Head of caudate nucleus (tissue), 42 donors: ENCODE measurements at regions of chr14 and their contacts with region 1.

Region 1: GRCh38 chr14:20613094-20614037 is 22.2 kb upstream of the RNASE12 start:
- DNase-seq: peak; percentile 60 to 95 (median 79)

Region 2: GRCh38 chr14:20327005-20327869 is 286.1 kb before region 1 on chr14:
- intact Hi-C with region 1: loop called (anchors 5 kb)
- DNase-seq: peak in 11 of 42 donors; percentile 15 to 73 (median 45)

Region 3: DNA sequence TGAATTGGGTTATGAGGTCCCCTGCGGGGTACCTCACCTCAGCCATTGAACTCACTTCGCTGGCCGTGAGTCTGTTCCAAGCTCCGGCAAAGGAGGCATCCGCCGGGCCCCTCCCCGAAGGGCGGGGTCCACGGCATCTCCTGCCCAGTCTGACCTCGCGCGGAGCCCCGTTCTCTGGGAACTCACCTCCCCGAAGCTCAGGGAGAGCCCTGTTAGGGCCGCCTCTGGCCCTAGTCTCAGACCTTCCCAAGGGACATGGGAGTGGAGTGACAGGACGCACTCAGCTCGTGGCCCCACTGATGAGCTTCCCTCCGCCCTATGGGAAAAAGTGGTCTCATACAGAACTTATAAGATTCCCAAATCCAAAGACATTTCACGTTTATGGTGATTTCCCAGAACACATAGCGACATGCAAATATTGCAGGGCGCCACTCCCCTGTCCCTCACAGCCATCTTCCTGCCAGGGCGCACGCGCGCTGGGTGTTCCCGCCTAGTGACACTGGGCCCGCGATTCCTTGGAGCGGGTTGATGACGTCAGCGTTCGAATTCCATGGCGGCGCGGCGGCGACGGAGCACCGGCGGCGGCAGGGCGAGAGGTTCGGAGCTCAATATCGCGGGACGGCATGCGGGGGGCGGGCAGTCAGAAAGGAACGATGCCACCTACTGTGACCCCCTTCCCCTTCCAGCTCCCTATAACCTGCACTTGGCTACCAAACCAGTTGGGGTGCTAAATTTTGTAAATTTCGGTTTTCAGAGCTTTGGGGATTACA is 270.1 kb before region 1 on chr14 and contains the start of gene PARP2:
- intact Hi-C with region 1: loop called (anchors 5 kb)
- DNase-seq: peak; percentile 94 to 100 (median 98)

Region 4: DNA sequence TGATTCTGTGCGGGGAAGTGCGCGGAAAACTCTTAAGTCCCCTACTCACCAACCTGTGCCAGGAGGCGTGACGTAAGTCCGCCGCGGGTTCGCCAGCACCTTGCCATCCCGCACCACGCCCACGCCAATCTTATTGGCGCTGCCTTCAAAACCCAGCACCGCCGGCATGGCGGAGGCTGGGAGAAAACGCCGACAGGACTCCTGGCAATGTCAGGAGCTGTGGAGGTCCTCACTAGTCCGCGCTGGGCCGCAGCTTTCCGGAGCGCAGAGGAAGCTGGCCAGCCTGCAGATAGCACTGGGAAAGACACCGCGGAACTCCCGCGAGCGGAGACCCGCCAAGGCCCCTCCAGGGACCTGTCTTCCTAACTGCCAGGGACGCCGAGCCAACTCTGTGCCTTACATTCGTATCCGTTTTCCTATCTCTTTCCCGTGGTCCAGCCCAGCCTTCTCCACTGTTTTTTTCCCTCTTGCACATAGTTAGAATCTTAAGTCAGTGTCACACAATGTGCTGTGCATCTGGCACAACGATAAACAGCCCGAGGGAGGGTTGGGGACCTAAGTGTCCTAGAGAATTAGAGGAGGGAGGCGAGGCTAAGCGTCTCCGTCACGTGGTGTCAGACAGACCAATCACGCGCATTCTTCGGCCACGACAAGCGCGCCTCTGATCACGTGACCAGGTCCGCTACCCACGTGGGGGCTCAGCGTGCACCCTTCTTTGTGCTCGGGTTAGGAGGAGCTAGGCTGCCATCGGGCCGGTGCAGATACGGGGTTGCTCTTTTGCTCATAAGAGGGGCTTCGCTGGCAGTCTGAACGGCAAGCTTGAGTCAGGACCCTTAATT is 158.6 kb before region 1 on chr14 and contains the starts of genes APEX1 and OSGEP:
- intact Hi-C with region 1: loop called (anchors 5 kb)
- DNase-seq: peak; percentile 95 to 100 (median 99)

Region 5: GRCh38 chr14:20652996-20653975 is 39.9 kb after region 1 on chr14:
- intact Hi-C with region 1: no loop called
- DNase-seq: peak in 8 of 42 donors; percentile 8 to 44 (median 25)

Region 6: DNA sequence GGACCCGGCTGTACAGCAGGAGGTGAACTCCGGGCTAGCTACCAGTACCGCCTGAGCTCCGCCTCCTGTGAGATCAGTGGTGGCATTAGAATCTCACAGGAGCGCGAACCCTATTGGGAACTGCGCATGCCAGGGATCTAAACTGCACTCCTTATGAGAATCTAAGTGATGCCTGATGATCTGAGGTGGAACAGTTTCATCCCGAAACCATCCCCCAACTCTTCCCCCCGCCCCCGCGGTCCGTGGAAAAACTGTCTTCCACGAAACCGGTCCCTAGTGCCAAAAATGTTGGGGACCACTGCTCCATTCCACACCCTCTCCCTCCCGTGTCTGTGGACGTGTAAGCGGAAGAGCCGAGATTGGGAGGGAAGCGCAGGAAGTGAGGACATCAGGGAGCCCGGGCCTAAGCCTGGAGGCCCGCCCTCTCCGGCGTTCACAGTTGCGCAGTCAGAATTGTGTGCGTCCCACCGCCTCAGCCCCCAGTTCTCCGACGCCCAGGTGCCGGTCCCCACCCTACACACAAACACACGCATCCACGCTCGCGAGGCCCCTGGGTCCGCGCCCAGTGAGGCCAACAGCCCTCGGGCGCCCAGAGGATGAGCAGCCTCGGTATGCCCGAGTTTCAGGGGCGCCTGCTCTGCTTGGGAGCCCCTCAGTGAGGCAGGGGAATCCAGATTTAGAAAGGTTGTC is 69.2 kb after region 1 on chr14:
- intact Hi-C with region 1: loop called (anchors 2 kb)
- DNase-seq: peak; percentile 84 to 97 (median 92)